ENCODE measurements at regions of chr12 and their contacts with region 1.

Region 1: DNA sequence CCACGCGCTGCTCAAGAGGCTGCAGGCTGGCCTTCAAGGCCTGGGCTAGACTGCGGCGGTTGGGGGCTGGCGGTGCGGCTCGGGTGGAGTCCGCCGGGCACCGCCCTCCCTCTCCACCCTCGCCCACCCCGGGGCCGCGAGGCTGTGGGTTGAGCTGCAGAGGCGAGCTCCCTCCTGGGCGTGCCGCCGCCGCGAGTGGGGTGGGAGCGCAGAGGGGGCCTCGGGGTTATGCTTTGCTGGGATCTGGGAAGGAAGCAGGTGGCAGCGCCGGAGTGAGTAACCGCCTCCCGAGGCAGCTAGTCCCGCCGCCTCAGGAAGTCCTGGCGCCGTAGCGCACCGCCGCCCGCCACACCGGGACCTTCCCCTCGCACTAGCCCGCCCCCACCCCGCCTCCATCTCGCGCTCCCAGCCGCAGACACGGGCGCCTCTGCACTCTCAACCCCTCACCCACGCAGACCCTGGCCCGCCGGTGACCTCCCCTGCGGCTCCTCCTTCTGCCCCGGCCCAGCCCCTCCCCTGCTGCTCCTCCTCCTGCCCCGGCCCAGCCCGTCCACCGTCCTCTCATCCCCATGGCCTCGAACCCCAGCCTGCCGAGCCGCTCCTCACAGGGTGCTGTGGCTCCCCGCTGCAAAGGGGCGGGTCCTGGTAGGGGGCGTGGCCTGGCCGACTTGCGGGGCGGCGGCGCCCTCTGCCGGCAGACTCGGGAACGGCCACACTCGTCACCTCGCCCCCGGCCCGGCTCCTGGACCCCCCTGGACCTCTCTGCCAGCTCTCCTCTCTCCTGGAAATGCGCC is 16.6 kb downstream of the TAMALIN start:
- DNase-seq: no peak
- ATAC-seq: peak; percentile 81
- H3K4me3 ChIP-seq: peak overlapping the region; percentile 52 to 73
- H3K27ac ChIP-seq: peak overlapping the region; percentile 57; the same call in 1 of the 2 replicates
- H3K4me1 ChIP-seq: peaks cover 6% of the 10 kb centered on the region
- H3K27me3 ChIP-seq: no peaks in the 10 kb centered on the region
- CTCF ChIP-seq: peak; percentile 99

Region 2: GRCh38 chr12:51488281-51488680 is 535.1 kb before region 1 on chr12:
- CTCF ChIA-PET with region 1: interaction called, 14 read pairs
- POLR2A ChIA-PET with region 1: no interaction called
- in situ Hi-C with region 1: no loop called
- intact Hi-C with region 1: no loop called
- DNase-seq: no peak
- ATAC-seq: no peak
- H3K4me3 ChIP-seq: no peak overlapping the region
- H3K27ac ChIP-seq: no peak overlapping the region
- H3K4me1 ChIP-seq: no peaks in the 10 kb centered on the region
- H3K27me3 ChIP-seq: no peaks in the 10 kb centered on the region
- CTCF ChIP-seq: no peak

Region 3: DNA sequence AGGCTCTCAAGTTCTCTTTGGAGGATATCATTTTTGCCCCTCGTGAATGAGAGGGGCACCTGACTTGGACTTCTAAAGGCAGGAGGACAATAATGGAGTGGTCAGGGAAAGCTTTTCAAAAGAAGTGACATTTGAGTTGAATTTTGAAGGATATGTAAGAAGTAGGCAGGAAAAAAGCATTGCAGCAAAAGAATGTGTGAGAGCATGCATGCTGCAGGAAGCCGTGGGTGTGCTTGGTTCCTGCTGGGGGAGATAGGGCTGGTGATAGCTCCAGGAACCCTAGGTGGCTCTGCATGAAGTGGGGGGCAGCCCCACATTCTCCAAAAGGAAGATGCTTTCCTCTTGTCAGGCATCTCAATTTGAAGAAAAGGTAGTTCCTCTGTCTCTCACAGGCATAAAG is 48.7 kb before region 1 on chr12:
- CTCF ChIA-PET with region 1: no interaction called
- POLR2A ChIA-PET with region 1: interaction called, 11 read pairs
- in situ Hi-C with region 1: no loop called
- intact Hi-C with region 1: no loop called
- DNase-seq: no peak
- ATAC-seq: no peak
- H3K4me3 ChIP-seq: no peak overlapping the region
- H3K27ac ChIP-seq: no peak overlapping the region
- H3K4me1 ChIP-seq: 0 out of 2 replicates have a peak, but pooled peaks cover 4% of the 10 kb centered on the region
- H3K27me3 ChIP-seq: no peaks in the 10 kb centered on the region
- CTCF ChIP-seq: no peak

Region 4: DNA sequence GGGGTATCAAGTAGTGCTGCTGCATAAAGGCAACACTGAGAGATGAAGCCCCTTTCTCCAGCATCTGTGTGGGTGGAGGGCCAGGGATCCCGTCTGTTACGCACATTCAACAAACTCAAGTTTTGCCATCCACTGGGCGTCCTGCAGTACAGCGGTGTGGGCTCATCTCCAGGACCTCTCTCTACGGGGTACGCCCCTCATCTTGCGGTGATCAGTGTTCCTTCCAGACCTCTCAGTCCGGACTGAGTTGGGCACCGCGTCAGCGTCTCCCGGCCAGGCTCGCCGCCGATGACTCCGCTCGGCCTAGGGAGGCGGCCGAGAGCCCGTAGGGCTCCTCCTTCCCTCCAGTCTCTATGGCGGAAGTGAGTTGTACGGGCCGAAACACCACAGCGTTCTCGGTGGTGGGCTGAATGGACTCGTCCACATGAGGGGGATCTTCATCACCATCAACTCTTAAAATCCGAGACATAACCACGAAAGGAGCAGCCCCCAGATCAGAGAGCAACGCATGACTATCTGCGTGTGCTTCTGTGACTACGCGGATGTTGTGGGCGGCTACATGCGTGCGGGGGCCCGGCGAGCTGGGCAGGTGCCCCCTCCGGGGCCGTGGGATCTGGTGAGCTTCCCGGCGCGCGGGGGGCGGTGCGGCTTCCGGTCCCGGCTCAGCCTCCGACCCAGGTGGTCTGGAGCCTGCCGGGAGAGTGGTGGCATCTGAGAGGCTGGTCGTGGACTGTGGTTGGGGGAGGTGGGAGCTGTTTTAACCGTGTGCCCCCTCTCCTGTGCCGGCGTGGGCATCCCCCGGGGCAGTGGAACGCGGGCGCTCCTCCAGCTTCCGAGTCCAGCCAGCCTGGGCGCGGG is 46.2 kb after region 1 on chr12 and contains the start of gene ATG101:
- CTCF ChIA-PET with region 1: interaction called, 13 read pairs
- POLR2A ChIA-PET with region 1: no interaction called
- in situ Hi-C with region 1: no loop called
- intact Hi-C with region 1: no loop called
- DNase-seq: peak; percentile 89
- ATAC-seq: peak; percentile 99
- H3K4me3 ChIP-seq: peak within 1 kb of the TSS; percentile 94 to 96
- H3K27ac ChIP-seq: peak within 1 kb of the TSS; percentile 96
- H3K4me1 ChIP-seq: peaks cover 10% of the 10 kb centered on the region
- H3K27me3 ChIP-seq: no peaks in the 10 kb centered on the region
- CTCF ChIP-seq: peak; percentile 92
- total RNA-seq, gene ATG101: 64.9 TPM

Region 5: DNA sequence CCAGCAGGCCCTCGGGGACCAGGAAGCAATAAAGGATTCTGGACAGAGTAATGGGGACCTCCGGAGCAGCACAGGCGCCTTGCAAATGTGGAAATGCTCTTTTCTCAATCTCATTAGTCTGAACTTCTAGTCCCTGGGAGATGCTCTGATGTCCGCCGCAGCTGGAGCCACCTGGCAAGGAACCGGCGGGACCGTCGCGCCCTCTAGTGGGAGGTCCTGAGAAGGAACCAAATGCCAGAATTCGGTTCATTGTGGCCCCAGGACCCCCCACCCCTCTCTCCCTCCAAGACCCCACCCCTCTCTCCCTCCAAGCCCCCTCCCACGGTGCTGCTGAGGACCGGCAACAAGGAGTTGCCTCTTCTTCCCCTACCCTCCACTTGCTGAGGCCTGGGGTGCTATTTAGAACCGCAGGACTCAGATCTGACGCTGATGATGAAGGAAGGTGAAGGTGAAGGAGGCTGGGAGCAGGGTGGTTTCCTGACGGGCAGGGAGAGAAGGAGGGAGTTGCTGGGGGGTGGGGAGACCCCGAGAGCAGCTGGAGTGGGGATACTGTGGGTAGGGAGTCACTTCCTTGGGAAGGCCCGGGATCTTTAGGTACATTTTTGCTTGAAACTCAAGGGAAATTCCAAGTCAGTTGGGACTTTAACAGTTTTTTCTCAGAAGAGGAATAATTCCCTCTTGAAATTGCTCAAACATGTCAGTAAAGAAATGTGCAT is 98.6 kb after region 1 on chr12:
- CTCF ChIA-PET with region 1: interaction called, 24 read pairs
- POLR2A ChIA-PET with region 1: no interaction called
- in situ Hi-C with region 1: no loop called
- intact Hi-C with region 1: loop called (anchors 5 kb)
- DNase-seq: no peak
- ATAC-seq: peak; percentile 67
- H3K4me3 ChIP-seq: no peak overlapping the region
- H3K27ac ChIP-seq: no peak overlapping the region
- H3K4me1 ChIP-seq: no peaks in the 10 kb centered on the region
- H3K27me3 ChIP-seq: no peaks in the 10 kb centered on the region
- CTCF ChIP-seq: peak; percentile 94

Region 6: GRCh38 chr12:52171950-52172512 is 148.7 kb after region 1 on chr12:
- CTCF ChIA-PET with region 1: no interaction called
- POLR2A ChIA-PET with region 1: no interaction called
- in situ Hi-C with region 1: no loop called
- intact Hi-C with region 1: no loop called
- DNase-seq: no peak
- ATAC-seq: peak; percentile 18; the same call in 1 of the 2 replicates
- H3K4me3 ChIP-seq: no peak overlapping the region
- H3K27ac ChIP-seq: peak overlapping the region; percentile 68
- H3K4me1 ChIP-seq: peaks cover 32% of the 10 kb centered on the region
- H3K27me3 ChIP-seq: no peaks in the 10 kb centered on the region
- CTCF ChIP-seq: peak; percentile 84

Measured in Panc1 (cell line).